ENCODE measurements at regions of chr7 and their contacts with region 1.

Region 1: DNA sequence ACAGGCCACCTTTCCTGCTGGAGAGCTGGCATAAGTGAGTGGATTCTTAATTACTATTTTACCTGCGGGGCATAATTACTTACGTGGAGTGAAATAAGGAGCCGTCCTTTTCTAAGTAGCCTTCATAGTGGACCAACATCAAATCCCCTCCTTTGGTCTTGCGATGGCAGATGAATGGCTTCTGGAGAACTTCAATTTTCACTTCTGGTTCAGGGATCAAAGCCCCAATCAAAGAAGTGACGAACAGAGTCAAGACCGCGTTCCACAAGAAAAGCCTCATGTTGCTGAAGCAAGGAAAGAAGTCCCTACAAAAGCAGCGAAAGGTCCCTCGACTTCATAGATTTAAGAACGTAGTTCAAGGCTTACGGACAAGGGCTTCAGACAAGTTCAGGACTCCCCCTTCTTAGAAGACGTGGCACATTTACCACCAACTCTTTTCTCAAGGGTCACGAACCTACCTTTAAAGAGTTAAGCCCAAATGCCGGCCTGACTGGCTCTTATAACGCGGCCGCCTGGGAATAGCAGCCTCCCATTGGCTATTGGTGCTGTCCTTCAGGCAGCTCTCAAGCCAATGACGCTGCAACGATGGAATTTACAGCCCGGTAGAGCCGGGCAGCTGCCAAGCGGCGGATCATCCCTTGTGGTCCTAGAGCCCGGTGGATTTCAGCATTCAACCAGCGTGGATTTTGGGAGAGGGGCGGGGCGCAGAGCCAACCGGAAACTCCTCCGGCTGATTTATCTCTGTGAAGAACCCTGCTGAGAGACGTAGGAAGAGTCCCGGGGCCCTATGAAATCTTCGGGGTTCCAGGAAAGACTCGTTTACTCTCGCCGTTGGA is at the start of gene FKBP14:
- DNase-seq: peak; percentile 70 to 93 (median 89)
- ATAC-seq: peak; percentile 91
- H3K4me3 ChIP-seq: peak within 1 kb of the TSS; percentile 79
- H3K4me3 Mint-ChIP-seq: peak within 1 kb of the TSS in 6 of 10 donors; percentile 85 to 98 (median 89)
- H3K27ac ChIP-seq: peak within 1 kb of the TSS; percentile 69
- H3K27ac Mint-ChIP-seq: peak within 1 kb of the TSS; percentile 74 to 94 (median 88)
- H3K4me1 ChIP-seq: peaks cover 6 to 20% of the 10 kb centered on the region in 2 donors
- H3K4me1 Mint-ChIP-seq: peaks cover 28 to 47% (median 40%) of the 10 kb centered on the region in 7 donors
- H3K27me3 ChIP-seq: no peaks in the 10 kb centered on the region
- H3K27me3 Mint-ChIP-seq: no peaks in the 10 kb centered on the region
- total RNA-seq, gene FKBP14: 4.0 to 6.5 (median 5.3) TPM

Region 2: DNA sequence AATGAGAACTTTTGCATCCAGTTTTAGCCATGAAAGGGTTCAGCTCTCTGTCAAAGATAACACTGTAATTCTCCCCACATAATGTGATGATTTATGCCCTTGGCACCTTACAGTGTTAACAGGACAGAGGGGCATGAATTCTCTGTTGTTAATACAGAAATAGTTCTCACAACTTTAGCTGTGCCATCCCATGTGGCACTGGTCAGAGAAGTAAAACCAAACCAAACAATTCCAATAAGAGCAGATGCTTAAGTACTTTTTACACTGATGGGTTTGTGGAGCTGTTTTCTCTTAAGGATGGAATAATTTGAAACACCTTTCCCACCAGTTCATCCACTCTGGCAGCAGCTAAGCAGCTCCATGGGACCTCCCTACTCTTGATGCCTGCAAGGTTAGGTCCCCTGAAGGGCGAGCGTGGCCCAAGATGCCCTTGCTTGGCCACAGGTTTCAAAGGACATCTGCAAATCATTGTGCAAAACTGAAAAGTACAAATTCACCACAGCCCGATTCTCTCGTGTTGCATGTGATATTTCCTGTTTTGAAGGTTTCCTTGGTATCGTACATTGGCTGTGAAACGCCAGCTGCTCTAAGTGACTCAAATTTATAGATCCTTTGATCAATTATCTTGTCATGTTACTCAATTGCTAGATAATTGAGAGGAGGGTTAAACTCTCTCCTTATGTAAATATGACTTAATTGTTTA is 1696.6 kb before region 1 on chr7:
- CTCF ChIA-PET with region 1: no interaction called
- POLR2A ChIA-PET with region 1: no interaction called
- intact Hi-C with region 1: loop called in 1 of 2 experiments (anchors 2 kb)
- DNase-seq: peak in 7 of 9 donors; percentile 22 to 56 (median 42)
- ATAC-seq: peak; percentile 69
- H3K4me3 ChIP-seq: peak overlapping the region; percentile 15
- H3K4me3 Mint-ChIP-seq: peak overlapping the region; percentile 39 to 90 (median 82)
- H3K27ac ChIP-seq: peak overlapping the region; percentile 55
- H3K27ac Mint-ChIP-seq: peak overlapping the region; percentile 67 to 96 (median 91)
- H3K4me1 ChIP-seq: peaks cover 0 to 36% of the 10 kb centered on the region in 2 donors
- H3K4me1 Mint-ChIP-seq: peaks cover 18 to 47% (median 43%) of the 10 kb centered on the region in 7 donors
- H3K27me3 ChIP-seq: no peaks in the 10 kb centered on the region
- H3K27me3 Mint-ChIP-seq: peaks cover 0 to 4% (median 0%) of the 10 kb centered on the region in 5 donors

Region 3: GRCh38 chr7:28347475-28348318 is 1678.8 kb before region 1 on chr7:
- CTCF ChIA-PET with region 1: no interaction called
- POLR2A ChIA-PET with region 1: no interaction called
- intact Hi-C with region 1: no loop called
- DNase-seq: no peak
- ATAC-seq: no peak
- H3K4me3 ChIP-seq: no peak overlapping the region
- H3K4me3 Mint-ChIP-seq: no peak overlapping the region
- H3K27ac ChIP-seq: no peak overlapping the region
- H3K27ac Mint-ChIP-seq: no peak overlapping the region
- H3K4me1 ChIP-seq: no peaks in the 10 kb centered on the region
- H3K4me1 Mint-ChIP-seq: no peaks in the 10 kb centered on the region
- H3K27me3 ChIP-seq: no peaks in the 10 kb centered on the region
- H3K27me3 Mint-ChIP-seq: peaks cover 0 to 13% (median 5%) of the 10 kb centered on the region in 5 donors

Region 4: DNA sequence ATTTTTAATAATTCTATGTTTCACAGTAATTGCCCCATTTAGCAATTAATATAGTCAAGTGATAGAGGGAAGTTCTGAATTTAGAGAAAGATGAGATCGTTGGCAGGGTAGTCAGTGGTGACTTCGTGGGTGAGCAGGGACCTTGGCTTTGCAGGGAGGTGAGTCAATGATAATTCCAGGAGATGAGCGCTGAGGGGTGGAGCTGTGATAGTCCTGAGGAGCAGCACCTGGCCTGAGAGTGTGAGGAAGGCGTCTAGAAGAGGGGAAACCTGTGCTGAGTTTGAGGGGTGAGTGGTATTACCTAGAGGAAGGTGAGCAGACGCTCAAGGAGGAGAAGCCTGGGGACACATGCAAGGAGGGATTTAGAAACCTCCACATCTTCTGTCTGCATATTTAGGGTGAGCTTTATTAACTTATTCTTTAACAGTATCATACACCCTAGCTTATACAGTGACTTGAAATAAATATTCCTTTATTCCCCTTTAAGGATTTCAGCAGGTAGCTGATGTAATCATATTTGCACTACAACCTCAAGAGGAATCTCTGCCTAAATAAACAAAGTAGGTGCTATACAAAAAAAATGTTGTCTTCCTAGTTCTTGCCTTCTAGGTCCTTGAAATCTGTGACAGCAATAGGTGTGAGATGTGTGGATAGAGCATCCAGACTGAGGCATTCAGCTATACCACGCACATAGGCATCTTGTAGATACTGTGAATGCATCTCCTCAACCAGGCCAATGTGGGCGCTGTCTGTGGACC is 1066.2 kb before region 1 on chr7:
- CTCF ChIA-PET with region 1: no interaction called
- POLR2A ChIA-PET with region 1: no interaction called
- intact Hi-C with region 1: no loop called
- DNase-seq: no peak
- ATAC-seq: peak; percentile 19
- H3K4me3 ChIP-seq: no peak overlapping the region
- H3K4me3 Mint-ChIP-seq: no peak overlapping the region
- H3K27ac ChIP-seq: no peak overlapping the region
- H3K27ac Mint-ChIP-seq: no peak overlapping the region
- H3K4me1 ChIP-seq: peaks cover 0 to 3% of the 10 kb centered on the region in 2 donors
- H3K4me1 Mint-ChIP-seq: peaks cover 4 to 12% (median 8%) of the 10 kb centered on the region in 7 donors
- H3K27me3 ChIP-seq: no peaks in the 10 kb centered on the region
- H3K27me3 Mint-ChIP-seq: peaks cover 38 to 44% (median 40%) of the 10 kb centered on the region in 5 donors

Region 5: DNA sequence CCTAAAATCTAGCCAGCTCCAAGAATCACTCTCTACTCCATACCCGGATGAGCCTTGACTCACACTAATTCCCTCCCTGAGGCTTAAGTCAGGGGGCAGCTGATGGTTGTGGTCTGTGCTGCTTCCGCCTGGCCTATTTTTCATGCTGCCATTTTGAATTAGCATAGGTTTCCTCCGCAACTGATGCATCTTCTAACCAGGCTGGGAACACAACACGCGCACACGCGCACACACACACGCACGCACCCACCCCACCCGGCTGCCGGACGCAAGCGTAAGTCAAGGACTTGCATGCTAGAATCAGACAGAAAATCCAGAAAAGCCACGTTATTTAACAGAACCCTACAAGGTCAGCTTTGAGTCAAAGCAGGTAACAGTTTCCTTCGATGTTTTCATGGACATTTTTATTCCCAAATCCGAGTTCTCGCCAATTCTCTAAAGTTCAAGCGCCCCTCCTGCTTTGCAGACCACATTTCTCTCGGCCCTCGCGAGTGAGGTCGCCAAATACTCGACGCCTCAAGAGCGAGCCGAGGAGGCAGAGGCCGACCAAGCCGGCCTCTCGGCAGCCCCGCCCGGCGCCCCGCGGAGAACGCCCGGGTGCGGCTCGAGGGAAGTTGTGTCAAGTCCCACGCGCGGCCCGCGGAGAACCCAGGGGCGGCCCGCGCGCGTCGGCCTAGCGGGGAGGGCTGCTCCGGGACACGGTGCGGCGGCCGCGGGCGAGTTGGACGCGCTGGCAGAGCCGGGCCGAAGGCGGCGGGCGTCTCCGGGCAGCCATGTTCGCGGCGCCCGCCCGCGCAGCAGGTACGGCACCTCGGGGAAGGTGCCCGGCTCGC is 37.8 kb before region 1 on chr7:
- CTCF ChIA-PET with region 1: no interaction called
- POLR2A ChIA-PET with region 1: no interaction called
- intact Hi-C with region 1: loop called (anchors 2 to 5 kb)
- DNase-seq: peak in 8 of 9 donors; percentile 2 to 36 (median 21)
- ATAC-seq: peak; percentile 62
- H3K4me3 ChIP-seq: peak overlapping the region; percentile 52
- H3K4me3 Mint-ChIP-seq: peak overlapping the region; percentile 68 to 85 (median 80)
- H3K27ac ChIP-seq: peak overlapping the region; percentile 54
- H3K27ac Mint-ChIP-seq: peak overlapping the region in 5 of 9 donors; percentile 3 to 72 (median 44)
- H3K4me1 ChIP-seq: no peaks in the 10 kb centered on the region
- H3K4me1 Mint-ChIP-seq: peaks cover 6 to 15% (median 7%) of the 10 kb centered on the region in 7 donors
- H3K27me3 ChIP-seq: peaks cover 0 to 7% of the 10 kb centered on the region in 2 donors
- H3K27me3 Mint-ChIP-seq: peaks cover 43 to 69% (median 57%) of the 10 kb centered on the region in 5 donors

Region 6: DNA sequence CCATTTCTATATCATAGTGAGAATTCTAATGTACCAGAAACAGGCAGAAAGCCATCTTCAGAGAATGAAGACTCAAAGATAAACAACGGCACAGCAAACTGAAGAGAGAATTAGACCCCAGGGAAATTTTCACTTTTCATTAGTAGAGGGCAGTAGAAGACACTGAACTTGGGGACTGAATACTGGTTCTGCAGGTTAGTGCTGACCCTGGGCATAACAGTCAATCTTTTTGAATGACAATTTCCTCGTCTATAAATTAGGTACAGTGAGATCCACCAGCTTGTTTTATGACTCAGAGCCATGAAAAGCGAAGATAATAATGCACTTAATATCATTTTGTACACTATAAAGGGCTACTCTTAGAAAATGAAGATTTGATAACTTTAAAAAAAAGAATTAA is 13.7 kb before region 1 on chr7:
- CTCF ChIA-PET with region 1: no interaction called
- POLR2A ChIA-PET with region 1: no interaction called
- intact Hi-C with region 1: no loop called
- DNase-seq: no peak
- ATAC-seq: no peak
- H3K4me3 ChIP-seq: no peak overlapping the region
- H3K4me3 Mint-ChIP-seq: no peak overlapping the region
- H3K27ac ChIP-seq: no peak overlapping the region
- H3K27ac Mint-ChIP-seq: no peak overlapping the region
- H3K4me1 ChIP-seq: no peaks in the 10 kb centered on the region
- H3K4me1 Mint-ChIP-seq: no peaks in the 10 kb centered on the region
- H3K27me3 ChIP-seq: no peaks in the 10 kb centered on the region
- H3K27me3 Mint-ChIP-seq: no peaks in the 10 kb centered on the region

Region 7: DNA sequence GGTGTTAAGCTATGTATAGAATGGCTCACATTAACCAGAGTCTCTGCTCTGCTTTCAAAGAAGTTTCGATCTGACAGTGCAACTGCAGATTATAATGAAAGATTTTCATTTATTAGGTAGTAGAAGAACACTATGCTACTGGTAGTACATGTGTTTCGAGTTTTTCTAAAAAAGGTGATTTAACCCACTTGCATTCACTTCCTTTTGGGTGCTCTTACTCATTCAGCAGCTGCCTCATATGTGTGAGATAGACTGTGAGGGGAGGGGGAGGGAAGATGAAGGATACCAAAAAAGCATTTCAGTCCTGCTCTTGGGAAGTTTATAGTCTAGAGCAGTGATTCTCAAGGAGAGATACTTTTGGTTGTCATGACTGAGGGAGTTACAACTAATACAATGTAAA is 22.1 kb after region 1 on chr7:
- CTCF ChIA-PET with region 1: no interaction called
- POLR2A ChIA-PET with region 1: no interaction called
- intact Hi-C with region 1: no loop called
- DNase-seq: no peak
- ATAC-seq: no peak
- H3K4me3 ChIP-seq: no peak overlapping the region
- H3K4me3 Mint-ChIP-seq: no peak overlapping the region
- H3K27ac ChIP-seq: no peak overlapping the region
- H3K27ac Mint-ChIP-seq: no peak overlapping the region
- H3K4me1 ChIP-seq: no peaks in the 10 kb centered on the region
- H3K4me1 Mint-ChIP-seq: no peaks in the 10 kb centered on the region
- H3K27me3 ChIP-seq: no peaks in the 10 kb centered on the region
- H3K27me3 Mint-ChIP-seq: no peaks in the 10 kb centered on the region

Region 8: DNA sequence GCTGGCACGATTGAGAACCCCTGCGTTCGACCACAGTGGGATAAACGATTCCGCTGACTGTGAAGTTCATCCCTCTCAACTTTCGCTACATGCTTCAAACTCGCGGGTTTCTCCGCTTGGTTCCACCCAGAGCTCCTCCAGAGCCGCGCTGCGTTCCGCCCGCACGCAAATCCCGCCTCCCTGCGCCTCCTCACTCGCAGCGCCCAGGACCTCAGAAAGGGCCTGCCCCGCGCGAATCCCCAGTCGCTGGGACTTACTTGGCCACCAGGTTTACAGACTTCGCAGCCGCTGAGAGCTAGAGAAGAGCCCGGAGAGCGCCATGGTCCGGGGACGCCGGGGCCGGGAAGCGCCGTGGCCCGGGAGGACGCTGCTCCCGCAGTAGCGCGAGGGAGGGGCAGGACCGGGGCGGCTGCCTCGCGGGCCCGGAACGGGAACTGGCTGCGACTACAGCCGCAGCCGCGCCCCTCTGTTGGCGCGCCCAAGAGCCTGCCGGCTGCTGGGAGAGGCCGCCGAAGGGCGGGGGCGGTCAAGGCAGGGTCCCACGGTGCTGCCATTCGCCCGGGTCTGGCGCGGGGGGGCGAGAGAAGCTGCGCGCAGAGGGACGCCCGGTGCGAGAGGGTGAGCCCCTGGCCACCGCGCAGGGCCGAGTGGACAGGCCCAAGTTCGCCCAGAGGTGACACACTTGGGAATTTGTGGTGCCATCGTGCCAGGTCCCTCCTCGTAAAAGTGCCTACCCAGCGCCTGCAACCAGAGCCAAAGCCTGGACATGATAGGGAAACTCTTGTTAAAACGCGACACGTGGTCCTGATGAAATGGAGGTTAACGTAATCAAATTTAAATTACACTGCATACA is 452.1 kb after region 1 on chr7 and contains the start of gene NOD1:
- CTCF ChIA-PET with region 1: no interaction called
- POLR2A ChIA-PET with region 1: interaction called, 3 read pairs
- intact Hi-C with region 1: loop called (anchors 1 to 2 kb)
- DNase-seq: peak; percentile 50 to 80 (median 65)
- ATAC-seq: peak; percentile 91
- H3K4me3 ChIP-seq: peak within 1 kb of the TSS; percentile 64
- H3K4me3 Mint-ChIP-seq: peak within 1 kb of the TSS in 9 of 10 donors; percentile 92 to 95 (median 94)
- H3K27ac ChIP-seq: peak within 1 kb of the TSS; percentile 80
- H3K27ac Mint-ChIP-seq: peak within 1 kb of the TSS in 6 of 9 donors; percentile 73 to 95 (median 90)
- H3K4me1 ChIP-seq: peaks cover 10 to 19% of the 10 kb centered on the region in 2 donors
- H3K4me1 Mint-ChIP-seq: peaks cover 22 to 54% (median 47%) of the 10 kb centered on the region in 7 donors
- H3K27me3 ChIP-seq: no peaks in the 10 kb centered on the region
- H3K27me3 Mint-ChIP-seq: no peaks in the 10 kb centered on the region
- total RNA-seq, gene NOD1: 17.3 to 24.6 (median 19.2) TPM

Region 9: GRCh38 chr7:30504347-30505173 is 478.1 kb after region 1 on chr7 and contains the start of gene GGCT:
- CTCF ChIA-PET with region 1: no interaction called
- POLR2A ChIA-PET with region 1: no interaction called
- intact Hi-C with region 1: loop called (anchors 1 kb)
- DNase-seq: peak; percentile 88 to 97 (median 95)
- ATAC-seq: peak; percentile 99
- H3K4me3 ChIP-seq: peak within 1 kb of the TSS; percentile 91
- H3K4me3 Mint-ChIP-seq: peak within 1 kb of the TSS; percentile 90 to 96 (median 95)
- H3K27ac ChIP-seq: peak within 1 kb of the TSS; percentile 72
- H3K27ac Mint-ChIP-seq: peak within 1 kb of the TSS; percentile 87 to 99 (median 91)
- H3K4me1 ChIP-seq: peaks cover 12% of the 10 kb centered on the region in 2 donors
- H3K4me1 Mint-ChIP-seq: peaks cover 19 to 51% (median 44%) of the 10 kb centered on the region in 7 donors
- H3K27me3 ChIP-seq: no peaks in the 10 kb centered on the region
- H3K27me3 Mint-ChIP-seq: no peaks in the 10 kb centered on the region
- total RNA-seq, gene GGCT: 9.5 to 39.2 (median 10.8) TPM

Region 10: GRCh38 chr7:30594549-30595435 is 568.3 kb after region 1 on chr7 and contains the start of gene GARS1:
- CTCF ChIA-PET with region 1: no interaction called
- POLR2A ChIA-PET with region 1: no interaction called
- intact Hi-C with region 1: loop called (anchors 1 kb)
- DNase-seq: peak; percentile 85 to 92 (median 90)
- ATAC-seq: peak; percentile 91
- H3K4me3 ChIP-seq: peak within 1 kb of the TSS; percentile 62
- H3K4me3 Mint-ChIP-seq: peak within 1 kb of the TSS; percentile 91 to 100 (median 99)
- H3K27ac ChIP-seq: peak within 1 kb of the TSS; percentile 91
- H3K27ac Mint-ChIP-seq: peak within 1 kb of the TSS; percentile 97 to 100 (median 99)
- H3K4me1 ChIP-seq: peaks cover 3 to 22% of the 10 kb centered on the region in 2 donors
- H3K4me1 Mint-ChIP-seq: peaks cover 52 to 88% (median 77%) of the 10 kb centered on the region in 7 donors
- H3K27me3 ChIP-seq: no peaks in the 10 kb centered on the region
- H3K27me3 Mint-ChIP-seq: no peaks in the 10 kb centered on the region
- total RNA-seq, gene GARS1: 73.8 to 143 (median 75.8) TPM

Region 11: DNA sequence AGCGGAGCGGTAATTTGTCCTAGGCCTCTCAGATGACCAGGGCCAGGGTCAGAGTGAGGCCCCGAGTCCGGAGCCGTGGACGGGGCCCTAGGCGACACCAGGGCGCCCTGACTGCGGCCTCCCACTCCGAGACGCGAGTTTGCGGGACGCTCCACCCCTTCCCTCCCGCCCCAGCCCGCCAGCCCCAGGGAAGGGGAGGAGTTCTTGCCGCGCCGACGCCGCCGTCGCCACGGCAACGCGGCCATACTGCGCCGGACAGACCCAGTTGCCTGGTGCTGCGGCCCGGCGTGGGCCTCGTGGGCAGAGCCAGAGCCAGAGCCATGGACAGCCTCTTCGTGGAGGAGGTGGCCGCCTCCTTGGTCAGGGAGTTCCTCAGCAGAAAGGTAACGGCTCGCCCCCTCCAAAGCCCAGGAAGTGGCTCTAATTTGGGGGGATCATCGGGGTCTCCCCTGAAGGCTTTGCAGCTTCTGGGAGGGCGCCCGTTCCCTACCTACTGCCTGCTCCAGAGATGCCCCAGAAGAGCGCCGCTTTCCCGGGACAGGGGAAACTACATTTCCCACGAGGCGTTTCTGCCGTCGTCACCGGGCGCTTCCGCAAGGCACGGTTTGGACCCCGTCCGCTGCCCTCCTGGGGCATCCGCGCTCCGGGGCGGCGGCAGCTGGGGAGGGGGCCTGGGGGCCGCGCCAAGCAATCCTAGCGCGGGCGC is 744.9 kb after region 1 on chr7 and contains the start of gene MINDY4:
- CTCF ChIA-PET with region 1: no interaction called
- POLR2A ChIA-PET with region 1: no interaction called
- intact Hi-C with region 1: loop called (anchors 2 to 5 kb)
- DNase-seq: peak; percentile 30 to 69 (median 52)
- ATAC-seq: peak; percentile 89
- H3K4me3 ChIP-seq: peak within 1 kb of the TSS; percentile 82
- H3K4me3 Mint-ChIP-seq: peak within 1 kb of the TSS; percentile 68 to 94 (median 88)
- H3K27ac ChIP-seq: peak within 1 kb of the TSS; percentile 71
- H3K27ac Mint-ChIP-seq: peak within 1 kb of the TSS; percentile 51 to 83 (median 70)
- H3K4me1 ChIP-seq: no peaks in the 10 kb centered on the region
- H3K4me1 Mint-ChIP-seq: peaks cover 0 to 12% (median 6%) of the 10 kb centered on the region in 7 donors
- H3K27me3 ChIP-seq: no peaks in the 10 kb centered on the region
- H3K27me3 Mint-ChIP-seq: peaks cover 0 to 9% (median 0%) of the 10 kb centered on the region in 5 donors
- total RNA-seq, gene MINDY4: 0.82 to 1.5 (median 0.94) TPM

Measured in naive thymus-derived CD4-positive, alpha-beta T cell (primary cell).